Activated CD8-positive, alpha-beta T cell treated with anti-CD3 and anti-CD28 coated beads, Interleukin-2, amount 10 ng/mL, durations not matched to agents 7 days and 5 days (primary cell): ENCODE measurements at regions of chr2 and their contacts with region 1.

Region 1: DNA sequence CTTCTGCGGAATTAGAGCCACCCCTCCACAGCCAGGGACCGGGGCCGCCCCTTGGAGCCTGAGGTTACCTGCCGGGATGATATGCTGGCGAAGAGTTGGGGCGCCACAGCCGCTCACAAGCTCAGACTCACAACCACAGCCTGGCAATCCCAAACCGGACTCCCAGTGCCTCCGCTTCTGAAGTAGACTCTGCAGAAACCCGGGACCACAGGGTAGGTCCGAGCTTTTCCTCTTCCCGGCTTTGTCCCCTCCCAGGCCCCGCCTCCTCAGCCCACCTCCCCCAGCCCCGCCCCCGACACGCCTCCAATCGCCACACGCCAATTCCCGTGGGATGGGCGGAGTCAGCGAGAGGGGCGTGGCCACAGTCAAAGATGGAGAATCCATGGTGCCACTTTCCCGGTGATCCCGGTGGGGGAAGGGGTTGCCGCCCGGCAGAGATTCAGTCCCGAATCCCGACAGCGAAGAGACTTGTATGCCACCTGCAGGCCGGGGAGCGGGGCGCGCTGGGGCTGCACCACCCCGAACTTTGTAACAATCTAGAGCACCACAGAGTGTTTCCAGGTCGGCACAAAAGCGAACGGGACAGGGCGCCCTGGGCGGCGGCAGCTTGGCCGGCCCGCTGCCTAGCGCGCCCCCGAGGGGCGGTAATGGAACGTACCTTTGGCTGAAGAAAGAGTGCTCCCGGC is at the start of gene IDH1:
- DNase-seq: peak; percentile 94
- ATAC-seq: peak; percentile 79
- H3K4me3 Mint-ChIP-seq: peak within 1 kb of the TSS; percentile 98
- H3K27ac Mint-ChIP-seq: peak within 1 kb of the TSS; percentile 58
- H3K4me1 Mint-ChIP-seq: peaks cover 23% of the 10 kb centered on the region
- H3K27me3 Mint-ChIP-seq: no peaks in the 10 kb centered on the region
- total RNA-seq, gene IDH1: 29.0 to 29.5 TPM

Region 2: GRCh38 chr2:208101716-208102631 is 153.0 kb before region 1 on chr2:
- CTCF ChIA-PET with region 1: interaction called, 32 read pairs
- POLR2A ChIA-PET with region 1: no interaction called
- DNase-seq: no peak
- ATAC-seq: no peak
- H3K4me3 Mint-ChIP-seq: no peak overlapping the region
- H3K27ac Mint-ChIP-seq: no peak overlapping the region
- H3K4me1 Mint-ChIP-seq: peaks cover 11% of the 10 kb centered on the region
- H3K27me3 Mint-ChIP-seq: peaks cover 5% of the 10 kb centered on the region

Region 3: DNA sequence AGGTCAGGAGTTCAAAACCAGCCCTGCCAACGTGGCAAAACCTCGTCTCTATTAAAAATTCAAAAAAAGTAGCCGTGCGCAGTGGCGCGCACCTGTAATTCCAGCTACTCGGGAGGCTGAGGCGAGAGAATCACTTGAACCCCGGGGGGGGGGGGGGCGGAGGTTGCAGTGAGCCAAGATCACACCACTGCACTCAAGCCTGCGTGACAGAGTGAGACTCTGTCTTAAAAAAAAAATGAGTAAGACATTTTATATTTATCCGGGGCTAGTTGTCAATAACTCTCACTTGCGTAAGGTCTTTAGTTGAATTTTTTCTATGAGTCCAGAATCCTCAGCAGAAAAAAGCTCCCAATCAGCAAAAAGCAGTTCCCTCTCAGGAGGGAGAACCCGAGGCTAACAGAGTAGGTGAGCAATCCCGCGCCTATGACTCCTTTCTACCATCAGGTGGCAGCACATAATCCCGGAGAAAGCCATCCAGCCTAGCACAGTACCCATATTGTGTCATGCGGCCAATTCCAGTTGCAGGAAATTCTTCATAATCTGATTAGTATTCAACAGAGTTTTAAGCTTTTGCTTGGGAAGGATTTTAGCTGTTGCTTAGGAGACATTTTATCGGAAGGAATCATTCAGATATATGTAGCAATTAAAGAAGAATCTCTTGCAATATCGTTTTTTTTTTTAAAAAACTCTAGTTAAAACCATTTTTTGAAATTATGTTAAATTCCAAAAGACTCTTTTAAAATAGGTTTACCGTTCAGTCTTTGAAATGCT is 79.8 kb before region 1 on chr2:
- CTCF ChIA-PET with region 1: interaction called, 44 read pairs
- POLR2A ChIA-PET with region 1: interaction called, 3 read pairs
- DNase-seq: peak; percentile 70
- ATAC-seq: peak; percentile 97
- H3K4me3 Mint-ChIP-seq: no peak overlapping the region
- H3K27ac Mint-ChIP-seq: no peak overlapping the region
- H3K4me1 Mint-ChIP-seq: peaks cover 3% of the 10 kb centered on the region
- H3K27me3 Mint-ChIP-seq: peaks cover 12% of the 10 kb centered on the region

Region 4: DNA sequence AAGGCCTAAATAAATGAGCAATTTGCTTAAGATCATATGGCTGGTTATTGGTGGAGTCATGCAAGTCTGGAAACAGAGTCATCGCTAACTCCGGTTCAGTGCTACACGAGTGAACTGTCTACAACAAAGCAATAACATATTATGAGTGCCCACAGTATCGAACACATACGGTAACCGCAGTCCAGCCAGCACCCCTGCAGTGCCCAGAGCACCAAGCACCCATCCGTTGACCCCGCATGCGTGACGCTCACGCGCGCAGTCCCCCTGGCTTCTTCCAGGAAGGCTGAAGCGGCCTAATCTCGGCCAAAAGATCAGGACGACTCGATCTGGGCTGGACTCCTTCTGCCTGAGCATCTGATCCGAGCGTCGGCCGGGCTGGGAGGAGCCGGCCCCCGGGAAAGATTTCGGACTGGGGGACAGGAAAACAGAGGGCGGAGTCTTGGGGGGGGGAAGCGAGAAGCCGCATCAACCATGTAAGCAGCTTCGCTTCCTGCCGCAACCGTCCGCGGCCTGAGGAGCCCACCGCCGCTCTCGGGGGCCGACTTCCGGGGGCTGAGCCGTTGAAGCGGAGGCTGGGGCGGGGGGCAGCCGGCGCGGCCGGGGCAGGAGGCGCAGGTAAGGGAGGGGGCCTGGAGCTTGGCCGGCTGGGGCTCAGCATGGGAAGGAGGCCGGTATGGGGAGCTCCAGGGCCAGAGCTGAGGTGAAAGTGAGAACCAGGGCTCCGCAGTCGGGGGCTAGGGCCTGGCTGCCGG is 11.0 kb after region 1 on chr2 and contains the start of gene PIKFYVE:
- CTCF ChIA-PET with region 1: interaction called, 106 read pairs
- POLR2A ChIA-PET with region 1: interaction called, 4 read pairs
- DNase-seq: peak; percentile 95
- ATAC-seq: peak; percentile 87
- H3K4me3 Mint-ChIP-seq: peak within 1 kb of the TSS; percentile 85
- H3K27ac Mint-ChIP-seq: peak within 1 kb of the TSS; percentile 94
- H3K4me1 Mint-ChIP-seq: peaks cover 37% of the 10 kb centered on the region
- H3K27me3 Mint-ChIP-seq: no peaks in the 10 kb centered on the region
- total RNA-seq, gene PIKFYVE: 27.4 to 29.3 TPM

Region 5: GRCh38 chr2:208280234-208280633 is 25.2 kb after region 1 on chr2:
- CTCF ChIA-PET with region 1: interaction called, 10 read pairs
- POLR2A ChIA-PET with region 1: no interaction called
- DNase-seq: no peak
- ATAC-seq: no peak
- H3K4me3 Mint-ChIP-seq: no peak overlapping the region
- H3K27ac Mint-ChIP-seq: no peak overlapping the region
- H3K4me1 Mint-ChIP-seq: peaks cover 7% of the 10 kb centered on the region
- H3K27me3 Mint-ChIP-seq: no peaks in the 10 kb centered on the region